ENCODE measurements at regions of chr10 and their contacts with region 1.

Region 1: DNA sequence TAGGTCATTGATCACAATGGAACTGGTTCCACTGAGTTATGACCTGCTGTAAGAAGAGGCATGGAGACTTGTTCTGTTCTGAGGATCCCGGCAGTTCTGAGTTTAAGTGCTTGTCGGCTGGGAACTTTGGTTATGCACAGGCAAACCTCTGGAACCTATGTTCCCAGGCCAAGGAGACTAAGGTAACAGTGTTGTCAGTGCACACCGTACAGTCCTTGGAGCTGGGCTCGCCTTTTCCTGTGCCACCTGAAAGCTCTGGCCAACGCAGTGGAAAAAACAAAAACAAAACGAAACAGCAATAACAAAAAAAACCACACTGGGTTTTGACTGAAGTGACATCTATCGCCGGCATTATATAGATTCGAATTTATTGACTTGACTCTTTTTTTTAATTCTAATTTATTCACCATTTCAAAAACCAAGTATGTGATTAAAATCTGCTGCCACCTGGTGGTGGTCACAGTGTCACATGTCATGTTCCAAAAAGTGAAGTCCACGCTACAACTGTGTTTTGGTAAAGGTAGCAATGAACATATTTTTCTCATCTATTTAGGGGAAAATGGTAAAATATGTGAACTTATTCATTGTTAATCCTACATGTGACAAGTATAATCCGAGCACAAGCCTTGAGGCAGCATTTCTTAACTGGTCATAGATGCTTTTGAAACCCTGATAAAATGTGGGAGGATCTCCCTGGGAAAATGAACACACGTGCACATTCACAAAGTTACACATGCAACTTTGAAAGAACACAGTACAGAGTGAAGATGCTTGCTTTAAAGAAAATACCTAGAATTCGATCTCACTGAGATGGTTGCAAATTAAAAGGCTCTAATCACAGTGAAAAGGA is 113.8 kb upstream of the PPP2R2D start:
- DNase-seq: peak; percentile 36
- H3K4me3 Mint-ChIP-seq: no peak overlapping the region
- H3K27ac Mint-ChIP-seq: no peak overlapping the region
- H3K4me1 Mint-ChIP-seq: no peaks in the 10 kb centered on the region
- H3K27me3 Mint-ChIP-seq: peaks cover 14% of the 10 kb centered on the region

Region 2: DNA sequence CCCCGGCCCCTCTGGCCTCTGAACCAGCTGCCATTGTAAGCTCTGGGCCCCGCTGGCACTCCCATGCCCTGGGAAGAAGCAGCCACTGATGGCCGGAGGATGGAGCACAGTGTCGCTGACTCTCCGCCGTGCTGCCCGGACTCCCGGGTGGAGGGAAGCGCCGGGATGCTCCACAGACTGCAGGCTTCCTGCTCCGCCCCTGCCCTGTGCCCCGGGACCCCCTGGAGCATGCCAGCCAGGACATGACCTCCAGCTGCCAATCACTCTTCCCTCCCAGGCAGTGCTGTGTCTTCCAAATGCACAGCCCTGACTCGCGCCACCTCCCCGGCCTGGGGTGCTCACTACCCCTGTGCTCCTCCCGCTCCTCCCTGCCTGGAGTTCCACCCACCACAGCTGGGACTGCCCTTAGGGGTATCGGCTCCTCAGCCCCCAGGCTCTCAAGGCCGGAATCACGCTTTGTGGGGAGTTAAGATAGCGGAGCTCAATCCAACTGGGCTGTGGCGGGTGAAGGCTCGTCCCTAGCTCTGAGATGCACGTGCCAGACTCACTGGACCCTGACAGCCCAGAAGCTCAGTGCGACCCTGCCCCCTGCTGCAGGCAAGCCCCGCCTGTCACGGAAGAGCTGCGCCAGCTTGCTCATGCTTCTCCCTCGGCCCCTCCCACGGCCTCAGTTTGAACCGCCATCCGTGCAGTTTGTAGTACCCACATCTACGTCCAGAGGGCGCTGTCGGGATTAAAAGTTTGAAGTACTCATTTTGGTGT is 333.2 kb before region 1 on chr10:
- CTCF ChIA-PET with region 1: no interaction called
- POLR2A ChIA-PET with region 1: no interaction called
- intact Hi-C with region 1: loop called (anchors 5 kb)
- DNase-seq: peak; percentile 82
- H3K4me3 Mint-ChIP-seq: no peak overlapping the region
- H3K27ac Mint-ChIP-seq: no peak overlapping the region
- H3K4me1 Mint-ChIP-seq: peaks cover 6% of the 10 kb centered on the region
- H3K27me3 Mint-ChIP-seq: peaks cover 14% of the 10 kb centered on the region

Region 3: DNA sequence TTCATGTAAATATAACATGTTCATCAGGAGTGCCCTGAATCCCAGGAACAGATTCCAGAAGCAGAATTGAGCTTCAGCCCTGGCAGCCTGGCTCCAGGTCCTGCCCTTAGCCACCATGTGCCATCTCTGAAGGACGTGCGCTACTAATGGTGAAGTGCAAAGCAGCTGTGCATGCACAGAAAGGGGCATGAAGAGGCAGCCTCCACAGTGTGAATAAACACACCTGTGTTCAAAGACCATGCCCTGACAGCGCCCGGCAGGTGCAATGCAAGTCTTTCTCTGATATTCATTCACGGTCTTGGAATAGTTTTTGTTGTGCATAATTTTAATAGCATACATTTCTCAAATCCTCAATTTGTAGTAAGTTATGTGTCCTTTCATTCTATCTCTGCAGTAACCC is 225.1 kb before region 1 on chr10:
- CTCF ChIA-PET with region 1: no interaction called
- POLR2A ChIA-PET with region 1: no interaction called
- intact Hi-C with region 1: loop called (anchors 5 kb)
- DNase-seq: no peak
- H3K4me3 Mint-ChIP-seq: no peak overlapping the region
- H3K27ac Mint-ChIP-seq: no peak overlapping the region
- H3K4me1 Mint-ChIP-seq: no peaks in the 10 kb centered on the region
- H3K27me3 Mint-ChIP-seq: peaks cover 3% of the 10 kb centered on the region

Region 4: GRCh38 chr10:132129431-132129830 is 342.4 kb after region 1 on chr10:
- CTCF ChIA-PET with region 1: no interaction called
- POLR2A ChIA-PET with region 1: no interaction called
- intact Hi-C with region 1: no loop called
- DNase-seq: no peak
- H3K4me3 Mint-ChIP-seq: no peak overlapping the region
- H3K27ac Mint-ChIP-seq: no peak overlapping the region
- H3K4me1 Mint-ChIP-seq: no peaks in the 10 kb centered on the region
- H3K27me3 Mint-ChIP-seq: peaks cover 16% of the 10 kb centered on the region

Measured in activated CD4-positive, alpha-beta memory T cell treated with anti-CD3 and anti-CD28 coated beads for 36 hours (primary cell).